ENCODE measurements at regions of chr1 and their contacts with region 1.

Region 1: DNA sequence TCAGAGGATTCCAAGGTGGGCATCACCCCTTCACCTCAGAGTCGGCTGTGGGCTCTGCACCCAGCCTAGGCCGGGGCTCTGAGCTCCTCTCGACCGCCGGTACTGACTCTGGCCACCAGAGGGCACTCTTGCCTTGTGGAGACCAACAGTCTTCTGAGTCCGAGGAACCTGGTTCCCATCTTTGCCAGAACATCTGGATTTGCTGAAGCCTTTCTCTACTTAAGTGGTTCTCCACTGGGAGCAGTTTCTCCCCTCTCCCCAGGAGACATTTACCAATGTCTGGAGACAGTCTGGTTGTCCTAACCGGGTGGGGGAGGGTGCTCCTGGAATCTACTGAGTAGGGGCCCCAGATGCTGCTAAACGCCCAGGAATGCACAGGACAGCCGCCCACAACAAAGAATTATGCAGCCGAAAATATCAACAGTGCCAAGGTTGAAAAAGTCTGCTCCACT is 9.4 kb downstream of the ETV3L start:
- DNase-seq: peak; percentile 77 to 85
- ATAC-seq: peak; percentile 95 to 98
- H3K4me3 ChIP-seq: no peak overlapping the region
- H3K27ac ChIP-seq: no peak overlapping the region
- H3K4me1 ChIP-seq: no peaks in the 10 kb centered on the region
- CTCF ChIP-seq: peak; percentile 93
- EP300 ChIP-seq: no peak
- POLR2A ChIP-seq: no peak
- RAD21 ChIP-seq: peak; percentile 94 to 95

Region 2: DNA sequence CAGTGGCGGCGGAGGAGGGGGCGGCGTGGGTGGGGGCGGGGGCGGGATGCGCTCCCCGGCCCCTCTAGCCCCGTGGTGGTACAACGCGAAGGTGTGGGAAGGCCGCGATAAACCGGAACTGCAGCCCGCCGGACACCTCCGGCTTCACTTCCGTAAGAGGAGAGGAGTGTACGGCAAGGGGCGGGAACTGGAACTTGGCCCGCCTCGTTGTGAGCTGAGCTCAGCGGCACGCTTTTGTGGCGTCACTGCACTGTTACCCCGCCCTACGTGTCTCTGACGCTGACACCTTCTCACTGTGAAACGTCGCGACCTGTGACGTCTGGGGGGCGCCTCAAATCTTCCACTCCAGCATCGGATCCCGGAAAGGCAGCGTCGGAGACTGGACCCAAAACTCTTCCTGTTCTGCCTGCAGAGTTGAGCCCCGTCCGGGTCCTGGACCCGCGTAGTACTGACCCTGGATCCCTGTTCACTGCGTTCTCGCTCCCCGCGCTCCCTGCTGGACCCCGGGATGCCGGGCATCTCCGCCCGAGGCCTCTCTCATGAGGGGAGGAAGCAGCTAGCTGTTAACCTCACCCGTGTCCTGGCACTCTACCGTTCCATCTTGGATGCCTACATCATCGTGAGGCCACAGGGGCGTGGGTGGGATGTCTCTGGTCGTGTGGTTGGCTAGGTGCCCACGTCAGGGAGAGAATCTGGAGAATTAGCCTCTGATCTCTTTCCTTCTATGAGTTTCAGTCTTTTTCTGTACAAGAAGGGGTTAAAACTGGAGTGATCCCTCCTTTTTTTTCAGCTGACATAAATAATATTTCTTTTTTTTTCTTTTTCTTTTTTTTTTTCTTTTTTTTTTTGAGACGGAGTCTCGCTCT is 361.4 kb before region 1 on chr1 and contains the start of gene ISG20L2:
- CTCF ChIA-PET with region 1: no interaction called
- POLR2A ChIA-PET with region 1: no interaction called
- DNase-seq: peak; percentile 94 to 99
- ATAC-seq: peak; percentile 87 to 89
- H3K4me3 ChIP-seq: peak within 1 kb of the TSS; percentile 89
- H3K27ac ChIP-seq: peak within 1 kb of the TSS; percentile 93
- H3K4me1 ChIP-seq: peaks cover 35% of the 10 kb centered on the region
- CTCF ChIP-seq: no peak
- EP300 ChIP-seq: no peak
- POLR2A ChIP-seq: peak; percentile 29
- RAD21 ChIP-seq: no peak
- polyA plus RNA-seq, gene ISG20L2: 42.5 and 55.7 TPM in 2 replicates

Region 3: DNA sequence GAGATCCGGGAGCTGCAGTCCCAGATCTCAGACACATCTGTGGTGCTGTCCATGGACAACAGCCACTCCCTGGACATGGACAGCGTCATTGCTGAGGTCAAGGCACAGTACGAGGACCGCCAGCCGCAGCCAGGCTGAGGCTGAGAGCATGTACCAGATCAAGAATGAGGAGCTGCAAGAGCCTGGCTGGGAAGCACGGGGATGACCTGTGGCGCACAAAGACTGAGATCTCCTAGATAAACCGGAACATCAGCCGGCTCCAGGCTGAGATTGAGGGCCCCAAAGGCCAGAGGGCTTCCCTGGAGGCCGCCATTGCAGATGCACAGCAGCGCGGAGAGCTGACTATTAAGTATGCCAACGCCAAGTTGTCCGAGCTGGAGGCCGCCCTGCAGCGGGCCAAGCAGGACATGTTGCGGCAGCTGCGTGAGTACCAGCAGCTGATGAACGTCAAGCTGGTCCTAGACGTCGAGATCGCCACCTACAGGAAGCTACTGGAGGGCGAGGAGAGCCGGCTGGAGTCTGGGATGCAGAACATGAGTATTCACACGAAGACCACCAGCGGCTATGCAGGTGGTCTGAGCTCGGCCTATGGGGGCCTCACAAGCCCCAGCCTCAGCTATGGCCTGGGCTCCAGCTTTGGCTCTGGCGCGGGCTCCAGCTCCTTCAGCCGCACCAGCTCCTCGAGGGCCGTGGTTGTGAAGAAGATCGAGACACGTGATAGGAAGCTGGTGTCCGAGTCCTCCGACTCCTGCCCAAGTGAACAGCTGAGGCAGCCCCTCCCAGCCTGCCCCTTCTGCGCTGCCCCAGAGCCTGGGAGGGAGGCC is 16.1 kb before region 1 on chr1:
- CTCF ChIA-PET with region 1: interaction called, 44 read pairs
- POLR2A ChIA-PET with region 1: no interaction called
- DNase-seq: peak; percentile 56 to 74
- ATAC-seq: peak; percentile 64 to 83; a peak in 5 of 6 replicates
- H3K4me3 ChIP-seq: peak overlapping the region; percentile 25
- H3K27ac ChIP-seq: no peak overlapping the region
- H3K4me1 ChIP-seq: peaks cover 5% of the 10 kb centered on the region; the same call in 2 of the 3 replicates
- CTCF ChIP-seq: peak; percentile 47
- EP300 ChIP-seq: no peak
- POLR2A ChIP-seq: no peak
- RAD21 ChIP-seq: peak; percentile 50 to 58; a peak in 4 of 5 replicates

Region 4: GRCh38 chr1:157117527-157118057 is 27.4 kb after region 1 on chr1:
- CTCF ChIA-PET with region 1: interaction called, 79 read pairs
- POLR2A ChIA-PET with region 1: no interaction called
- DNase-seq: no peak
- ATAC-seq: no peak
- H3K4me3 ChIP-seq: no peak overlapping the region
- H3K27ac ChIP-seq: no peak overlapping the region
- H3K4me1 ChIP-seq: no peaks in the 10 kb centered on the region
- CTCF ChIP-seq: no peak
- EP300 ChIP-seq: no peak
- POLR2A ChIP-seq: no peak
- RAD21 ChIP-seq: no peak

Region 5: DNA sequence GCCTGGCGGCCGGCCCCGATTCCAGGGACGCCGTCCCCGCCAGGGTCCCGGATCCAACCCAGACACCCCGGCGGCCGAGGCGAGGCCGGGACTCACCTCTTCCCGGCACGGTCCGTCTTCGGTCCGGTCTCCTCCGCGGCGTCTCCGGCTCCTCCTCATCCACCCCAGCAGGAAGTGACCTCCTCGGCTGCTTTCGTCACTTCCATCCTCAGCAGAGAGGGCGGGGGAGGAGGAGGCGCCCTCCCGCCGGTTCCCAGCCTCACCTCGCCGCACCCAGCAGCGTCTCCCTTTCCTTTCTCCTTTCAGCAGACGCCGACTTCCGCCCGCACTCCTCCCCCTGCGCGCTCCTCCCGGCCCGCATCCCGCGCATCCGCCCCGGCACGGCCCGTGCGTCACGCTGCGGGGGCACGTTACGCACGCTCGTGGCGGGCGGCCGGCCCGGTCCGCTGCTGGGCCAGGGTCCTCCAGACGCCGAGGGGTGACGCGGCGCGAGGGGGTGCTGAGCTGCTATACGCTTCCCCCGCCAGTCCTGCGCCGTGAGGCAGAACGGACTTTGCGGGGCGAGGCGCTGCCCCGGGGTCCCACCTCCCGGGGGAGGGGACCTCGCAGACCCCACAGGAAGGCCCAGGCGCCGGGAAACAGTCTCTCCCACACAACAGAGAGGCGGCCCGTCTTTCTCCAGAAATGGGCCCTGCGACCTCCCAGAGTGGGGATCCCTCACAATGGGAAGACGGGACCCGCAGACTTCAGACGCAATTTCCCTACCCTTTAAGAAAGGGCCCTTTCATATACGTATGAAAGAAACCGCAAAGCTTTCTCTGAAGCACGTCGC is 48.2 kb after region 1 on chr1 and contains the start of gene ETV3:
- CTCF ChIA-PET with region 1: interaction called, 36 read pairs
- POLR2A ChIA-PET with region 1: interaction called, 3 read pairs
- DNase-seq: peak; percentile 90 to 92
- ATAC-seq: peak; percentile 96 to 98
- H3K4me3 ChIP-seq: peak within 1 kb of the TSS; percentile 96
- H3K27ac ChIP-seq: peak within 1 kb of the TSS; percentile 91 to 98
- H3K4me1 ChIP-seq: peaks cover 14% of the 10 kb centered on the region
- CTCF ChIP-seq: no peak
- EP300 ChIP-seq: no peak
- POLR2A ChIP-seq: peak; percentile 68
- RAD21 ChIP-seq: no peak
- polyA plus RNA-seq, gene ETV3: 12.3 and 14.5 TPM in 2 replicates

Region 6: DNA sequence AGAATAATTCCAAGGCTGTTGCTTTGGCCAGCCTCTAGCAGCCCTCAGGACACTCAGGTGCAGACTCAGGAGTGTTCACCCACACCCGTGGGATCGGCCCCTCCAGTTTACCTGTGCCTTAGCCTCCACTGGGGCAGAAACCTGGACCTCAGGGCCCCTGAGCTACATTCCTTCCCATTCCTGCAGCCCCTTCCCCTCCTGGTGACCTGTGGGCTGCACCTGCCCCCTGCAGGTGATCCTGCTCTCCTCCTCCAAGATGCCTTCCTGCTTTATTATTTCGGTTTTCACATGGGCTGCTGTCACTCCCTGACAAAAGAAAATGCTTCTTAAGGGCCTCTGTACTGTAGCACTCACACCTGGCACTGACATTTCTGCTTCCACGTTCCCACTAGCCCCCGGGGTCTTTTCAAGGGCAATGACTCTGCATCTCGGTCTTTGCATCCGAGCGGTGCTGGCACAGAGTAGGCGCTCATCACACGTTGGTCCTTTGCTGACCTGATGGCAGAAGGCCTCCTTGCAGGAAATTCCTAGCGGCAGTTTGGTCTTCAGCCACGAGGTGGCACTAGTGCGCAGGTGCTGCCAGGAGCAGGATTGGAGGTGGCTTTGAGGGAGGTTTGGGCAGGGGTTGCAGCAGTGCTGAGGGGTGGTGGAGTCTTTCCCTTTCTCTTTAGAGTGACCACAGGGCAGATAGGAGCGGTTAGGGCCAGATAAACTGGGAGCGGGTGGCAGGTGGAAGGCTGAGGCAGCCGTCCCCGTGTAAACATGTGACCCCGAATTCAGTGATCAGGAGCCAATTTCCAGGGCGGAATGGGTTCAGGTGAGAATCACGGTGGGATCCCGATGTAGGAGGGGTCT is 73.3 kb after region 1 on chr1:
- CTCF ChIA-PET with region 1: interaction called, 437 read pairs
- POLR2A ChIA-PET with region 1: no interaction called
- DNase-seq: peak; percentile 73 to 79
- ATAC-seq: peak; percentile 83 to 94
- H3K4me3 ChIP-seq: peak overlapping the region; percentile 42
- H3K27ac ChIP-seq: peak overlapping the region; percentile 58 to 77; a peak in 5 of 6 replicates
- H3K4me1 ChIP-seq: no peaks in the 10 kb centered on the region
- CTCF ChIP-seq: peak; percentile 78
- EP300 ChIP-seq: no peak
- POLR2A ChIP-seq: no peak
- RAD21 ChIP-seq: peak; percentile 31 to 32; a peak in 3 of 5 replicates

Region 7: DNA sequence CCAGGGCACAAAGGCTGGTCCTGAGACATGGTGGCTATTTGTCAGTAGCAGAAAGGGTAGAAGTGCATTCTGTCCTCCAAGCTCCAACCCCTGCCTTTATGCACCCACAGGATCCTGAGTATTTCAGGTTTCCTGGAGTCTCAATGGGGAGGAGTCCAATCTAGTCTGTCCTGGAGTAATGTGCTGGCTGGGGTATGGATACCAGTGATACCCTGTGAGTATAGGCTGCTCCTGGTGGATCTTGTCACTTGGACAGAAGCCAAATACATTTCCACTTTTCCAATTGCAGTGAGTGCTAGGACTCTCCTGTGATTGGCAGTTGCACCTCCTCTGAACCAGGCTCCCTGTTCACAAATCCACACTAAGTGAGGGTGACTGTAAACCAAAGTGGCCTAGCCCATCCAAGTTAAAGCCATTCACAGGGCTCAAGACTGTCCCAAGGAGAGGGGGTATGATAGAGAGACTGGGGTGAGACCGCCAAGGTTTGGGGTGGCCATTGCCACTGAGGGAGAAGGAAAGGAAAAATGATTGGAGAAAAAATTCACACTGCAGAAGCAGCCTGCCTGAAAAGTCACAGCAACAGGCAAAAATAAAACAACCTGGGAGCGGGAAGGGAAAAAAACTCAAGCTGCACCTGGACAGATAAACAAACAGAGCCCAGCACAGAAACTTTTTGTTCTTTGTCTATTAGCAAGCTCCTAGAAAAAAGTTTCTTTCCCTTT is 211.4 kb after region 1 on chr1:
- CTCF ChIA-PET with region 1: no interaction called
- POLR2A ChIA-PET with region 1: no interaction called
- DNase-seq: no peak
- ATAC-seq: no peak
- H3K4me3 ChIP-seq: no peak overlapping the region
- H3K27ac ChIP-seq: no peak overlapping the region
- H3K4me1 ChIP-seq: no peaks in the 10 kb centered on the region
- CTCF ChIP-seq: no peak
- EP300 ChIP-seq: no peak
- POLR2A ChIP-seq: no peak
- RAD21 ChIP-seq: no peak